HCT116 (cell line): ENCODE measurements at regions of chr3 and their contacts with region 1.

Region 1: GRCh38 chr3:56525291-56525690 is 31.7 kb upstream of the CCDC66 start:
- DNase-seq: no peak
- ATAC-seq: no peak
- H3K4me3 ChIP-seq: no peak overlapping the region
- H3K27ac ChIP-seq: no peak overlapping the region
- H3K4me1 ChIP-seq: no peaks in the 10 kb centered on the region
- H3K27me3 ChIP-seq: peaks cover 34% of the 10 kb centered on the region
- CTCF ChIP-seq: no peak
- POLR2A ChIP-seq: no peak
- RAD21 ChIP-seq: no peak

Region 2: GRCh38 chr3:56502738-56503137 is 22.6 kb before region 1 on chr3:
- CTCF ChIA-PET with region 1: no interaction called
- POLR2A ChIA-PET with region 1: no interaction called
- RAD21 ChIA-PET with region 1: no interaction called
- intact Hi-C with region 1: loop called (anchors 1 kb)
- DNase-seq: no peak
- ATAC-seq: no peak
- H3K4me3 ChIP-seq: no peak overlapping the region
- H3K27ac ChIP-seq: no peak overlapping the region
- H3K4me1 ChIP-seq: no peaks in the 10 kb centered on the region
- H3K27me3 ChIP-seq: peaks cover 17% of the 10 kb centered on the region
- CTCF ChIP-seq: no peak
- POLR2A ChIP-seq: no peak
- RAD21 ChIP-seq: no peak

Region 3: DNA sequence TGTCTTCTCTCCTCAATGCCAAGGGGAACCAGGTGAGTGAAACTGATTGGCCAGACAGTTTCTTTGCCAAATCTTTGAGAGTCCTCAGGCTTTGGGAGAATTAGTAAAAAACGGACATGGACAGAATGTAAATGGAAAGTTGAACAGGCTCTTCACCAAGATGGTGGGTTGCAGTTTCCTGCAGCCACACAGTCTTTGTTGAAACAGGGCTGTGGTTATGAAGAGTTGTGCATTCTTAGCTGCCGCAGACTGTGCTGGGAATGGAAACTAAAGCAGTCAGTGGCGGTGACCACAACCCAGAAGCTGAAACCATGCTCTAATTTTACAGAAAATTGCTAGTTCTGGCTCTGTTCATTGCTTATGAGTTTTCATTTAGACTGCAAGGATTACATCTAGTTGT is 199.9 kb after region 1 on chr3:
- CTCF ChIA-PET with region 1: no interaction called
- POLR2A ChIA-PET with region 1: no interaction called
- RAD21 ChIA-PET with region 1: no interaction called
- intact Hi-C with region 1: no loop called
- DNase-seq: no peak
- ATAC-seq: no peak
- H3K4me3 ChIP-seq: no peak overlapping the region
- H3K27ac ChIP-seq: no peak overlapping the region
- H3K4me1 ChIP-seq: no peaks in the 10 kb centered on the region
- H3K27me3 ChIP-seq: no peaks in the 10 kb centered on the region
- CTCF ChIP-seq: no peak
- POLR2A ChIP-seq: no peak
- RAD21 ChIP-seq: no peak